A549 (cell line): ENCODE measurements at regions of chr4 and their contacts with region 1.

Region 1: GRCh38 chr4:88211473-88212252 is 53.2 kb upstream of the ABCG2 start:
- DNase-seq: peak in 1 of 2 experiments; percentile 42
- ATAC-seq: peak; percentile 73 to 89; a peak in 4 of 6 replicates
- H3K4me3 ChIP-seq: no peak overlapping the region
- H3K27ac ChIP-seq: peak overlapping the region; percentile 58 to 71
- H3K4me1 ChIP-seq: peaks cover 5% of the 10 kb centered on the region; the same call in 2 of the 3 replicates
- CTCF ChIP-seq: peak; percentile 82
- EP300 ChIP-seq: no peak
- POLR2A ChIP-seq: no peak
- RAD21 ChIP-seq: peak; percentile 94 to 95

Region 2: DNA sequence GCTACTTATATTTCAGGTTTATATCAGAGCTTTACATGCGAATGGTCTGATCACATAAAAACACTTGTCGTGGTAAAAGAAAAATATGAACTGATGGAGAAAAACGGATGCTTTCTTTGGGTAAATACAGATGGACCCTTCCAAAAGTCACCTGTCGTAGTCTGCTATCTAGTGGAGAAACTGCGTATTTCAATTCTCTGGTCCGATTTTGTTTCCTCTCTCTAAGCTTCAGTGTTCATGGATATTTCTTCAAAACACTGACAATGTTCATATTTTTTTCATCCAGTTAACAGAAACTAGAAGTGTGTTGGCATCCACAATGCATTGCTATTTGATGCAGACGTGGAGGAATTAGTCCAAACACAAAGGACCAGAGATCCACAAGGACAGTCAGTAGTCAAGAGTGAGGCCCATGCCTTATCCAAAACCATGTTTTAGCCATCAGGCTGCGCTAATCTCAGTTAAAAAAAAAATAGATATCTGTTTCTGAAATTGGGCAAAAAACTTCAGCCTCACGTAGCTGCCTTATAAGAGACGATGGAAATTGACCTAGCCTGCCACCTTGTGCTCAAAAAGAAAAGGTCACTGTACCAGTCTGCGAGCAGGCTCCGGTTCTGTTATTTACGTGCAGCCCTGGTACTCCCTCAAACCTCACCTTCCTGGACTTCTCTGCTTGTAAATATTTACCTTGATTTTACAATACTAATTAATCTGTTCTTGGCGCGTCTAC is 362.9 kb before region 1 on chr4:
- CTCF ChIA-PET with region 1: interaction called, 17 read pairs
- POLR2A ChIA-PET with region 1: no interaction called
- DNase-seq: peak; percentile 15 to 50
- ATAC-seq: peak; percentile 96 to 98
- H3K4me3 ChIP-seq: peak overlapping the region; percentile 37
- H3K27ac ChIP-seq: peak overlapping the region in 1 of 2 experiments; percentile 48; a peak in 1 of 6 replicates
- H3K4me1 ChIP-seq: peaks cover 13% of the 10 kb centered on the region; the same call in 1 of the 3 replicates
- CTCF ChIP-seq: peak; percentile 60
- EP300 ChIP-seq: no peak
- POLR2A ChIP-seq: no peak
- RAD21 ChIP-seq: peak; percentile 51 to 55

Region 3: DNA sequence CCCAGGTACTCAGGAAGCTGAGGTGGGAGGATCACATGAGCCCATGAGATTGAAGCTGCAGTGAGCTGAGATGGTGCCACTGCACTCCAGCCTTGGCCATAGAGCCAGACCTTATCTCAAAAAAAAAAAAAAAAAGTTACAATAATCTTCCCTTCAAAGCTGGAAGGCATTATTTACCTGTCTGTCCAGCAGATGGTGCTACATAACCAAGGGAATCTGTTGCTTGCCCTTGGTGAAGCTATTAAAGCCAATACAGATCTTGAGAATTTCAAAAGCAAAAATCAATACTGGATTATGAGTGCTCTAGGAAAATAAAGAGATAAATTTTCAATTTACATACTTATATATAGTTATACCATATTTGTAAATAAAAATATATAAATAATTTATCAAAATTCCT is 178.4 kb before region 1 on chr4:
- CTCF ChIA-PET with region 1: interaction called, 79 read pairs
- POLR2A ChIA-PET with region 1: interaction called, 5 read pairs
- DNase-seq: peak; percentile 23 to 68
- ATAC-seq: peak; percentile 47 to 75; a peak in 3 of 6 replicates
- H3K4me3 ChIP-seq: no peak overlapping the region
- H3K27ac ChIP-seq: no peak overlapping the region
- H3K4me1 ChIP-seq: peaks cover 7% of the 10 kb centered on the region; the same call in 1 of the 3 replicates
- CTCF ChIP-seq: peak; percentile 68
- EP300 ChIP-seq: no peak
- POLR2A ChIP-seq: no peak
- RAD21 ChIP-seq: peak; percentile 73 to 81

Region 4: GRCh38 chr4:88054901-88055300 is 156.8 kb before region 1 on chr4:
- CTCF ChIA-PET with region 1: interaction called, 29 read pairs
- POLR2A ChIA-PET with region 1: no interaction called
- DNase-seq: peak; percentile 17 to 72
- ATAC-seq: peak; percentile 94 to 99
- H3K4me3 ChIP-seq: no peak overlapping the region
- H3K27ac ChIP-seq: peak overlapping the region; percentile 1 to 23; a peak in 1 of 6 replicates
- H3K4me1 ChIP-seq: 0 out of 3 replicates have a peak, but pooled peaks cover 4% of the 10 kb centered on the region
- CTCF ChIP-seq: peak; percentile 40; the same call in 2 of the 3 replicates
- EP300 ChIP-seq: no peak
- POLR2A ChIP-seq: no peak
- RAD21 ChIP-seq: peak; percentile 76 to 83

Region 5: GRCh38 chr4:88191404-88191803 is 20.3 kb before region 1 on chr4:
- CTCF ChIA-PET with region 1: interaction called, 12 read pairs
- POLR2A ChIA-PET with region 1: no interaction called
- DNase-seq: peak in 1 of 2 experiments; percentile 50
- ATAC-seq: peak in 1 of 2 experiments; percentile 66; a peak in 3 of 6 replicates
- H3K4me3 ChIP-seq: no peak overlapping the region
- H3K27ac ChIP-seq: peak overlapping the region; percentile 47 to 81
- H3K4me1 ChIP-seq: peaks cover 45% of the 10 kb centered on the region
- CTCF ChIP-seq: no peak
- EP300 ChIP-seq: no peak
- POLR2A ChIP-seq: no peak
- RAD21 ChIP-seq: no peak

Region 6: GRCh38 chr4:88196523-88197185 is 15.0 kb before region 1 on chr4:
- CTCF ChIA-PET with region 1: interaction called, 17 read pairs
- POLR2A ChIA-PET with region 1: no interaction called
- DNase-seq: no peak
- ATAC-seq: no peak
- H3K4me3 ChIP-seq: no peak overlapping the region
- H3K27ac ChIP-seq: peak overlapping the region; percentile 48 to 75; a peak in 3 of 6 replicates
- H3K4me1 ChIP-seq: peaks cover 32% of the 10 kb centered on the region
- CTCF ChIP-seq: no peak
- EP300 ChIP-seq: no peak
- POLR2A ChIP-seq: no peak
- RAD21 ChIP-seq: no peak

Region 7: GRCh38 chr4:88230969-88231771 is 19.5 kb after region 1 on chr4:
- CTCF ChIA-PET with region 1: no interaction called
- POLR2A ChIA-PET with region 1: no interaction called
- DNase-seq: no peak
- ATAC-seq: no peak
- H3K4me3 ChIP-seq: no peak overlapping the region
- H3K27ac ChIP-seq: no peak overlapping the region
- H3K4me1 ChIP-seq: no peaks in the 10 kb centered on the region
- CTCF ChIP-seq: no peak
- EP300 ChIP-seq: no peak
- POLR2A ChIP-seq: no peak
- RAD21 ChIP-seq: no peak

Region 8: DNA sequence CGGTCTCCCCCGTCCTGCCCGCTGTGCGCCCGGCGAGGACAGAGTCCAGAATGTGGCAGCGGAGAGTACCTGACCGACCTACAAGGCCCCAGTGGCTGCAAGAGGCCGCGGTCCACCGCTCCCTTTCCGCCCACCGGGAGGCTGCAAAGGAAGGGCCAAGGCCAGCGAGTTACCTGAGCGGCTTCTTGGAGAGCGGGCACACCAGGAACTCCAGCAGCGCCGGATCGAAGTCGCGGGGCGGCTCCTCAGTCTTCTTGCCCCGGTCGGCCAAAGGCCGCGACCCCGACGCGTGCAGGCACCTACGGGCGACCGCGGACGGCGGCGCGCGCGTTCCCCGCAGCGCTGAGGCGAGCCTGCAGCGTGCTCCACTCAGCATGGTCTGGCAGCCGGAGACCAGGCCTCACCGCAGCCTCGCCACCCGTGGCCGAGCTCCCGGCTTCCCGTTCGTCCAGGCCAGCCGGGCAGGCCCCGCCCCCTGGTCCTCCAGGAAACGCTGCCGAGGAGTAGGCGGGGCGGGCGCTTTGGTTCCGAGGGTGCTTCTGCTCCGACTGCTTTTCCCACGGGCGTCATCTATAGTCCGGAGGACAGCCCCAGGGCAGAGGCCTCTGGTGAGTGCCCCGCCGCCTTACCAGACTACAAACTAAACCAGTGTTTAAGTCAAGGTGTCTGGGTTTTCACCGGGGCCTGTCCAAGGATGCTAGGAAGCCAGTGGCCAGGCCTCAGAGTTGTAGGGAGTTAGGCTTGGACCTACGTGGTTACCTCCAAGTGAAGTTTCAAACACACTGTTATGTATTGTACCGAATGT is 311.9 kb after region 1 on chr4 and contains the start of gene PYURF:
- CTCF ChIA-PET with region 1: interaction called, 182 read pairs
- POLR2A ChIA-PET with region 1: no interaction called
- DNase-seq: peak; percentile 65 to 90
- ATAC-seq: peak; percentile 96 to 97
- H3K4me3 ChIP-seq: peak within 1 kb of the TSS; percentile 80
- H3K27ac ChIP-seq: peak within 1 kb of the TSS; percentile 90 to 97
- H3K4me1 ChIP-seq: peaks cover 26% of the 10 kb centered on the region; the same call in 2 of the 3 replicates
- CTCF ChIP-seq: no peak
- EP300 ChIP-seq: no peak
- POLR2A ChIP-seq: peak; percentile 91
- RAD21 ChIP-seq: no peak
- polyA plus RNA-seq, gene PYURF: 51.1 and 70.2 TPM in 2 replicates